Activated T-helper 1 cell treated with anti-CD3 and anti-CD28 coated beads, Interleukin-12 subunit alpha, Interleukin-12 subunit beta, Interleukin-2, Interleukin-4 antibody, amounts not matched to agents 30 ng/mL and 10 ng/mL and 1 ng/mL, durations not matched to agents 14 hours and 24 hours and 36 hours (primary cell): ENCODE measurements at regions of chr1 and their contacts with region 1.

Region 1: GRCh38 chr1:159936273-159936904 is 9.0 kb downstream of the IGSF9 start:
- DNase-seq: peak; percentile 76
- H3K4me3 Mint-ChIP-seq: no peak overlapping the region
- H3K27ac Mint-ChIP-seq: no peak overlapping the region
- H3K4me1 Mint-ChIP-seq: peaks cover 9% of the 10 kb centered on the region
- H3K27me3 Mint-ChIP-seq: peaks cover 16% of the 10 kb centered on the region

Region 2: DNA sequence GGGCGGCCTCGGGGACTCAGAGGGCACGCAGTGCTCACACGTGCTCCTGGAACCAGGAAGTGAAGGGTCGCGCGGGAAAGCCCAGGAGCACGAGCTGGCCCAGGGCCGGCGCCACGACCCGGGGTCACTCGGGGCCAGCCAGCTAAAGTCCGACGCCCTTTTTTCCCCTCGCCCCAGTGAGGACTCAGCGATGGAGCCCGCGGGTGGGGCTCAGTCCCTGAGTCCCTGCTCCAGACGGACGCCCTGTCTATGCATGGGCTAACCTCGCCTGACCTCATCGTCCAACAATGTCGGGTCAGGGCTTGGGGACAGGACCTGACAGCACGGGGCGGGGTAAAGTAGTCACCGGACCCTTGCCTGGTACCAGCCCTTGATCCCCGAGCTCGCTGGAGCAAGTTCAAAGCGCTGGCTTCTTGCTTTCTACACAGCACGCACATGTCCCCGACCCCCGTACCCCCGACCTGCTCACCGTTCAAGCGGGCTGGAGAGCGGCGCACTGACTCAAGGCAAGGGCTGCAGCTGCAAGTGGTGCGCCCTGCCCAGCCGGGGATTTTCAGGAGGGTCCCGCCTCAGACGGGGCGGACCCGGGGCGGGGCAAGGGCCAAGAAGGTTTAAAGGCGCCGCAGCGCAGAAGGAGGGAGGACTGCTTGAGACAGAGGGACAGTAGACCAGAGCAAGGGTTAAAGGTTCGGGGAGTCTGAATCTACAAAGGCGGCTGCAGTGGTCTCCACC is 11.2 kb before region 1 on chr1 and contains the start of gene TAGLN2:
- intact Hi-C with region 1: loop called (anchors 1 kb)
- DNase-seq: peak; percentile 92
- H3K4me3 Mint-ChIP-seq: peak within 1 kb of the TSS; percentile 94
- H3K27ac Mint-ChIP-seq: peak within 1 kb of the TSS; percentile 99
- H3K4me1 Mint-ChIP-seq: peaks cover 57% of the 10 kb centered on the region
- H3K27me3 Mint-ChIP-seq: peaks cover 1% of the 10 kb centered on the region
- total RNA-seq, gene TAGLN2: 442 and 461 TPM in 2 replicates

Region 3: DNA sequence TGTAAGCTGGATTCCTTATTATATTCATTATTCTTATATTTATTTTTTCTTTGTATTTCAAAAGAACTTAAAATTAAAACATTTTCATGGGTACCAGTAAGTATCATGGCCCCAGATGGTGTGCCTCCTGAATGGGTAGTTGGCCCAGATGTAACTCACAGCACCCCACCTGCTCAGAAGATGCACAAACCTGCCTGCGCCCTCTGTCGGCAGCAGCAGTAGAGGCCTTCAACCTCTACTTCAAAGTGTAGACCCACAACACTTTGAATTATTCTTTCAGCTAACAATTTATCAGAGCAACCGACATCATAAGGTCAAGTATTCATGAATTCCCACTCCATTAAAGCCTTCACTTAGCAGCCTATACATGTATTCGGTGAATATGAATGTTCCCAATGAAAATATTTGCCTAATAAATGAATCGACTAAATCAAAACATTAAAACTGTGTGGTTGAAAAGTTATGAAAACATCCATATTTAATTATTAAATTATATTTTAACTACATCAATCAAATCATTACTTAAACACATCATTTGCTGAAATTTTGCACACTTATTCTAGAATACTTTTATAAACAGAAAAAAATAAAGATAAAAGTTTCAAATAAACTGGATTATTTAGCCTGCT is 70.0 kb after region 1 on chr1:
- intact Hi-C with region 1: loop called (anchors 1 kb)
- DNase-seq: peak; percentile 55
- H3K4me3 Mint-ChIP-seq: no peak overlapping the region
- H3K27ac Mint-ChIP-seq: no peak overlapping the region
- H3K4me1 Mint-ChIP-seq: no peaks in the 10 kb centered on the region
- H3K27me3 Mint-ChIP-seq: peaks cover 18% of the 10 kb centered on the region

Region 4: DNA sequence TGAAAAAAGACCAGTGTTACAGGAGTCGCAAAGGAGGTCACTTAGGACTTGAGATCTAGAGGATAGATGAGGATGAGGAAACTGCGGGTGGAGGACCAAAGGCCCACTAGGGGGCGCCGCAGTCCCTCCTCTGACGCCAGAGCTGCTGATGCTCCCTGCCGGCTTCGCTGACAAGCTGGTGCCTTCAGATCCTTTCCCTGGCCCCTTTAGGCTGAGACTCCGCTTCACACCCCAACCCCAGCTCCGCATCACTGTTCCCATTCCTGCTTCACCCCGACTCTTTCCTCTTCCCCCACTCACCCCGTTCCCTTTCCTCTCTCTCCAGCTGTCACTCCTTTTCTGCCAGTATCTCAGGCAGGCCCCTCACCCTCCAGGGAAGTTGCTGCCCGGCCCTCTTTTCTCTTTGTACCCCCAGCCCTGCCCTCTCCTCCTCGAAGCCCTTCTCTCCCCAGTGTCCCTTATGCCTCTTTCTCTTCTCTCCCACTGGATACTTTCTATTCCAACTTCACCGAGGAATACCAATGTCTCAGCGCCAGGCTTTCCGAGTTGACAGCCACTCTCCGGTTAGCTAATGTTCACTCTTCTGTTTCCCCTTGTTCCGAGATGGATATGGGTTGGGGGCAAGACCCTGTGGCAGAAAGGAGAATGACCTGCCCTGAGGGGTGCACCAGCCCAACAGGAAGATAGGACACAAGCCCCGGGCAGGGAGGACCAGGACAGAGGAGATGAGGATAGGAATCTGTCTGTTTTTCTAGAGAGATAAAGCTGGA is 149.5 kb after region 1 on chr1:
- intact Hi-C with region 1: loop called (anchors 1 kb)
- DNase-seq: peak; percentile 56
- H3K4me3 Mint-ChIP-seq: no peak overlapping the region
- H3K27ac Mint-ChIP-seq: no peak overlapping the region
- H3K4me1 Mint-ChIP-seq: peaks cover 17% of the 10 kb centered on the region
- H3K27me3 Mint-ChIP-seq: peaks cover 26% of the 10 kb centered on the region

Region 5: DNA sequence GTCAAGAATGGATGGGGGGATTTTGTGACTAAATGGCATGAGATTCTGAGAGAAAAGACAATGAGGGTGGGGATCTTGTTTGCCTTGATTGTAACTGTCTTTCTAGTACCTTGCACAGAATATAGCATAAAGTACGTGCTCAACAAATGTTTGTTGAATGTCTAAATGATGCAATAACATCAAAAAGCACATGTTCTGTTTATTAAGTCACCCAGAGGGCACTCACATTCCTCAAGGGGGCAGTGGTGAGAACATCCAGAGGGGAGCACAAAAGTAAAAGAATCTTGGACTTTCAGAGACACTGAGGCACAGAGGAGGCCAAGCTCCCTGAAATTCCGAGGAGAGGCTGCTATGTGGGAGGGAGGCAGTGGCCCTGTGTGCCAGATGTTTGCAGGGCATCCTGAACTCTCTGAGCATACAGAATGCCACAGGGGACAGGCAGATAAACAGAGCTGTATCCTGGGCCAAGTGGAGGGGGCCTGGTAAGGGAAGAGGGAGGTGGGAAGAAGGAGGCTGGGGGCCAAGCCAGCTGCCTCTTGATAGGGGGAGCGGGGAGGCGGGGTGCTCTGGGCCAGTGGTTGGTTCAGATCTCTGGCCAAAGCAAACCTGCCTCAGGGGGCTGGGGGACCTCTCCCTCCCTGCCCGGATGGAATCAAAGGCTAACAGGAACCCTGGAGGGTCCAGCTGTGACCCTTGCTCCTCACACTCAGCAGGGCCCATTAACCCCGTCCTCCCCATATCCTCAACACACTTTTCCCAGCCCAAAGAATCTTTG is 172.7 kb after region 1 on chr1:
- intact Hi-C with region 1: no loop called
- DNase-seq: no peak
- H3K4me3 Mint-ChIP-seq: no peak overlapping the region
- H3K27ac Mint-ChIP-seq: no peak overlapping the region
- H3K4me1 Mint-ChIP-seq: peaks cover 7% of the 10 kb centered on the region
- H3K27me3 Mint-ChIP-seq: peaks cover 2% of the 10 kb centered on the region

Region 6: GRCh38 chr1:161359291-161359690 is 1422.9 kb after region 1 on chr1:
- intact Hi-C with region 1: no loop called
- DNase-seq: no peak
- H3K4me3 Mint-ChIP-seq: no peak overlapping the region
- H3K27ac Mint-ChIP-seq: peak overlapping the region; percentile 20
- H3K4me1 Mint-ChIP-seq: peaks cover 14% of the 10 kb centered on the region
- H3K27me3 Mint-ChIP-seq: no peaks in the 10 kb centered on the region